Mammary epithelial cell (primary cell): ENCODE measurements at regions of chr10 and their contacts with region 1.

Region 1: GRCh38 chr10:44932517-44933450 is 21.6 kb downstream of the TMEM72 start:
- DNase-seq: peak; percentile 67
- H3K4me3 ChIP-seq: no peak overlapping the region
- H3K27ac ChIP-seq: no peak overlapping the region
- H3K4me1 ChIP-seq: peaks cover 14% of the 10 kb centered on the region
- H3K27me3 ChIP-seq: no peaks in the 10 kb centered on the region
- CTCF ChIP-seq: peak; percentile 95 to 99

Region 2: DNA sequence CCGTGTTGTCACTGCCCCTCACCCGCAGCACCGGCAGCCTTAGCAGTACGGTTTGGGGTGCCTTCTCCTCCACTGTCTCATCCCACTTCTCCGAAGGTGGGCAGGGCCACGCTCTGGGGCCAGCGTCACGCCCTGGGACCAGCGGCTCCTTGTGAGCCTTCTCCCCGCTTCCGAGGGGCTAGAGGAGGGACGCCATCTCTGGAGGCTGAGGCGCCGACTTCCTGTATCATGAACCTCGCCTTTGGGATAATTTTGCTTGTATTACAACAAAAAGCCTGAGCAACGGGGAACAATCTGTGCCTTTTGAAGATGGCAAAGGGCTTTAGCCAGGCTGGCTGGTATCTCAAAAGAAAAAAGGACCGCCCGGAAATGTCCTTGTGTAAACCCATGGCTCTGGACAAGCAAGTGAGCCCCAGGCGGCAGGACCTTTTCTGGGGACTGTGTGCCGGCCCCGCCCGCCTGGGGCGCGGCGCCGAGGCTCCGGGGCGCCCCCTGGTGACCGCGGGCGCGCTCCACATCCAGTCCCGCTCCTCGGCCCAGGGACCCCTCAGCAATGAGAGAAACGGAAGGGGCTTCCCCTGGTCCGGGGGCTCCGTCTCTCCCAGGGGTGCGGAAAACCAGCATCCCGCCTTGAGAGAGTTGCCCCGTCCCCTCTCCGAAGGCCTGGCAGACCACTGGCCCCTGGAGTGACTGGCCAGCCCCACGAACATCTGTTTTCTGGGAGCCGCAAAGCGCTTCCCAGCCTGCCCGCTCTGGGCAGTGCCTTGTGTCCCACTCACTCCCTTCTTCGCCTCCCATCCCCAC is 42.0 kb after region 1 on chr10:
- CTCF ChIA-PET with region 1: interaction called, 5 read pairs
- dilution Hi-C with region 1: no loop called
- in situ Hi-C with region 1: no loop called
- intact Hi-C with region 1: loop called (anchors 1 kb)
- DNase-seq: peak; percentile 57
- H3K4me3 ChIP-seq: peak overlapping the region; percentile 21 to 47 (median 30)
- H3K27ac ChIP-seq: peak overlapping the region; percentile 14
- H3K4me1 ChIP-seq: peaks cover 42% of the 10 kb centered on the region
- H3K27me3 ChIP-seq: no peaks in the 10 kb centered on the region
- CTCF ChIP-seq: peak; percentile 52 to 78